CD4-positive, alpha-beta T cell (primary cell): ENCODE measurements at regions of chr19 and their contacts with region 1.

Region 1: GRCh38 chr19:38263689-38264485 is 486 bp upstream of the SPINT2 start:
- DNase-seq: peak in 13 of 14 experiments; percentile 63 to 92 (median 74)
- ATAC-seq: peak; percentile 92
- H3K4me3 ChIP-seq: peak overlapping the region; percentile 68
- H3K4me3 Mint-ChIP-seq: peak overlapping the region; percentile 83
- H3K27ac ChIP-seq: peak overlapping the region; percentile 23 to 29
- H3K27ac Mint-ChIP-seq: peak overlapping the region; percentile 52
- H3K4me1 ChIP-seq: peaks cover 24% of the 10 kb centered on the region
- H3K4me1 Mint-ChIP-seq: peaks cover 31% of the 10 kb centered on the region
- H3K27me3 ChIP-seq: no peaks in the 10 kb centered on the region
- H3K27me3 Mint-ChIP-seq: peaks cover 5% of the 10 kb centered on the region
- CTCF ChIP-seq: no peak

Region 2: DNA sequence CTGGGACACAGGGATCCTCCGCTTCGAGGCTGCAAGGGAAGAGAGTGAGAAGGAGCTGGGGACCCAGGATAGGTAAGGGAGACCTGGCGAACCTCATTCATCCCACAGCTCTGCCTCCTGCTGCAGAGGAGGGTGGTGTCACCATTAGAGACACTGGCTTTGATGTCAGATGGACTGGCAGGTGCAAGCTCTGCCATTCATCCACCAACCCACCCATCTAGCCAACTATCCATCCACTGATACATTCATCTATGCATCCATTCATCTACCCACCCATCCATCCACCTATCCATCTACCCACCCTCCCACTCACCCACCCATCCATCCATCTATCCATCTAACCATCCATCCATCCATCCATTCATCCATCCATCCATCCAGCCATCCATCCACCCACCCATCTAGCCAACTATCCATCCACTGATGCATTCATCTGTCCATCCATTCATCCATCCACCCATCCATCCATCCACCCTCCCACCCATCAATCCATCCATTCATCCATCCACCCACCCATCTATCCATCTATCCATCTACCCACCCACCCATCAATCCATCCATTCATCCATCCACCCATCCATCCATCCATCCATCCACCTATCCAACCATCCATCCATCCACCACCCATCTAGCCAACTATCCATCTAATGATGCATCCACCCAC is 45.9 kb after region 1 on chr19:
- CTCF ChIA-PET with region 1: no interaction called
- POLR2A ChIA-PET with region 1: no interaction called
- intact Hi-C with region 1: loop called in 1 of 2 experiments (anchors 5 kb)
- DNase-seq: no peak
- ATAC-seq: no peak
- H3K4me3 ChIP-seq: no peak overlapping the region
- H3K4me3 Mint-ChIP-seq: no peak overlapping the region
- H3K27ac ChIP-seq: no peak overlapping the region
- H3K27ac Mint-ChIP-seq: no peak overlapping the region
- H3K4me1 ChIP-seq: peaks cover 2% of the 10 kb centered on the region
- H3K4me1 Mint-ChIP-seq: no peaks in the 10 kb centered on the region
- H3K27me3 ChIP-seq: no peaks in the 10 kb centered on the region
- H3K27me3 Mint-ChIP-seq: no peaks in the 10 kb centered on the region
- CTCF ChIP-seq: no peak

Region 3: DNA sequence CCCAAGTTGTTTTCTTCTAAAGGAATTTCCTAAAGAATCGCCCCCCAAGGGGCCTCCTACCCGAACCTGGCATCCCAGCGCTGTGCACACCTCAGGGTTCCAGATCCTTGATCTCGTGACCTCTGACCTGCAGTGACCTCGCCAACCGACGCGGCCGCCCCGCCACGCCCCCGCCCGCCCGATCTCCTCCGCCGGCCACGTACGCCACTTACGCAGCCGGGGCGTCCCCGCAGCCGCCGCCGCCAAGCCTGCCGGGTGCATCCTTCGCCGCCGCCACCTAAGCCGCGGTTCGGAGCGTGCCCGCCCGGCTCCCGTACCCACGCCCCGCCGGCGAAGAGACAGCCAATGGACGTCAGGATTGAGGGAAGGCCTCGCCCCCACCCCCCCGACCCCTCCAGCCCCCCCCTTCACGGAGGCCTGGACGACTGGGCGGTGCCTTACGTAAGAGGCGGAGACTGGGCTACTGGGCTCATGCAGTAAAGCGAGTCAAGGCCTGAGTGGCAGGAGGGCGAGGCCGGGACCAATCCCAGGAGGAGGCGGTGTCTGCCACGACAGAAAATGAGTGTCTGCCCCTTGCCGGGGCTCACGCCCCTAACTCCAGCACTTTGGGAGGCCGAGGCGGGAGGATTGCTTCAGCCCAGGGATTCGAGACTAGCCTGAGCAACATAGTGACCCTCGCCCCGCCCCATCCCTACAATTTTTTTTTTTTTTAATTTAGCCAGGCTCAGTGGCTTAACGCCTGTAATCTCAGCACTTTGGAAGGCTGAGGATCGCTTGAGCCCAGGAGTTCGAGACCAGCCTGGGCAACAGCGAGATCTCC is 52.0 kb after region 1 on chr19 and contains the start of gene YIF1B:
- CTCF ChIA-PET with region 1: interaction called, 3 read pairs
- POLR2A ChIA-PET with region 1: interaction called, 5 read pairs
- intact Hi-C with region 1: loop called (anchors 2 to 5 kb)
- DNase-seq: peak; percentile 90 to 98 (median 94)
- ATAC-seq: peak; percentile 90
- H3K4me3 ChIP-seq: peak within 1 kb of the TSS; percentile 76
- H3K4me3 Mint-ChIP-seq: peak within 1 kb of the TSS; percentile 90
- H3K27ac ChIP-seq: peak within 1 kb of the TSS; percentile 79 to 88
- H3K27ac Mint-ChIP-seq: peak within 1 kb of the TSS; percentile 88
- H3K4me1 ChIP-seq: peaks cover 51% of the 10 kb centered on the region
- H3K4me1 Mint-ChIP-seq: peaks cover 45% of the 10 kb centered on the region
- H3K27me3 ChIP-seq: no peaks in the 10 kb centered on the region
- H3K27me3 Mint-ChIP-seq: no peaks in the 10 kb centered on the region
- CTCF ChIP-seq: no peak
- total RNA-seq, gene YIF1B: 15.9 to 17.1 TPM